ENCODE measurements at regions of chr1 and their contacts with region 1.

Region 1: GRCh38 chr1:166865931-166866330 is 10.1 kb downstream of the TADA1 start:
- DNase-seq: no peak
- H3K4me3 ChIP-seq: no peak overlapping the region
- H3K27ac ChIP-seq: no peak overlapping the region
- H3K4me1 ChIP-seq: no peaks in the 10 kb centered on the region
- H3K27me3 ChIP-seq: no peaks in the 10 kb centered on the region
- CTCF ChIP-seq: no peak
- POLR2A ChIP-seq: no peak

Region 2: DNA sequence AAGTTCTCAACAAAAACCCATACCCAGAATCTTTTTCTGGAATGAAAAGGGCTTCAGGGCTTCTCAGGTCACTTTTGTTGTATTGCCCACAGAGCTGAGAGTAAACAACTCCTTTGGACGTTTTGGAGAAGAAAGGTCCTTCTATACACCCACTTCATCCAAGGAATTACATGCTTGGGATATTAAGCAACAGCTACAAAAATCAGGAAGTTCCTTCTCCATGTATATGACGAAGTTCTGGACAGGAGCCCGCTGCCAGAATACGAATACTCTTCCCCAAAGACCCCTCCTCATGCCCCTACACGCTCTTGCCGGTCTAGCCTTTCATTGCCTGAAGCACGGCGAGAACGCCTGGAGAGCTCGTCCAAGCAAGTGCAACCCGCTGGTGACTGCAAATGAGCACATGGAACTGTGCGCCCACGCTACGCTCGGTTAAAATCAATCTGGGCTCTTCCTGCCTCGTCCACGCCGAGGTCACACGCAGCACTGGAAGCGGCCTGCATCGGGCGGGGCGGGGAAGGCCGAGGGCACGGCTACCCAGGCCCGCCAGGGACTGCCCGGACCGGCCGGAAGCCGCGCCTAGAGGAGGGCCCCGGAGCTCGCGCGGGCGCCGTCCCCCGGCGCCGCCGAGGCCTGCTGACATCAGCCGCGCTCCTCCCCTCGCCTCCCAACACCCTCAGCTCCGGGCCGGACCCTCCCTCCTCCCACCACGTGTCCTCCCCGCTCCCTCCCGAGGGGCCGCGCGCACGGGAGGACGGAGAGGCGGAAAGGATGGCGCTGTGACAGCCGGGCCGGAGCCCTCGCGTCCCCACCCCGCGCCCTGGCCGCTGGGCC is 26.9 kb before region 1 on chr1 and contains the start of gene POGK:
- CTCF ChIA-PET with region 1: interaction called, 4 read pairs
- POLR2A ChIA-PET with region 1: no interaction called
- dilution Hi-C with region 1: no loop called
- intact Hi-C with region 1: loop called (anchors 2 kb)
- DNase-seq: peak; percentile 90
- H3K4me3 ChIP-seq: peak within 1 kb of the TSS; percentile 35 to 63 (median 54)
- H3K27ac ChIP-seq: peak within 1 kb of the TSS; percentile 14
- H3K4me1 ChIP-seq: peaks cover 18% of the 10 kb centered on the region
- H3K27me3 ChIP-seq: no peaks in the 10 kb centered on the region
- CTCF ChIP-seq: no peak
- POLR2A ChIP-seq: peak; percentile 81
- total RNA-seq, gene POGK: 31.8 and 32.2 TPM in 2 replicates

Region 3: DNA sequence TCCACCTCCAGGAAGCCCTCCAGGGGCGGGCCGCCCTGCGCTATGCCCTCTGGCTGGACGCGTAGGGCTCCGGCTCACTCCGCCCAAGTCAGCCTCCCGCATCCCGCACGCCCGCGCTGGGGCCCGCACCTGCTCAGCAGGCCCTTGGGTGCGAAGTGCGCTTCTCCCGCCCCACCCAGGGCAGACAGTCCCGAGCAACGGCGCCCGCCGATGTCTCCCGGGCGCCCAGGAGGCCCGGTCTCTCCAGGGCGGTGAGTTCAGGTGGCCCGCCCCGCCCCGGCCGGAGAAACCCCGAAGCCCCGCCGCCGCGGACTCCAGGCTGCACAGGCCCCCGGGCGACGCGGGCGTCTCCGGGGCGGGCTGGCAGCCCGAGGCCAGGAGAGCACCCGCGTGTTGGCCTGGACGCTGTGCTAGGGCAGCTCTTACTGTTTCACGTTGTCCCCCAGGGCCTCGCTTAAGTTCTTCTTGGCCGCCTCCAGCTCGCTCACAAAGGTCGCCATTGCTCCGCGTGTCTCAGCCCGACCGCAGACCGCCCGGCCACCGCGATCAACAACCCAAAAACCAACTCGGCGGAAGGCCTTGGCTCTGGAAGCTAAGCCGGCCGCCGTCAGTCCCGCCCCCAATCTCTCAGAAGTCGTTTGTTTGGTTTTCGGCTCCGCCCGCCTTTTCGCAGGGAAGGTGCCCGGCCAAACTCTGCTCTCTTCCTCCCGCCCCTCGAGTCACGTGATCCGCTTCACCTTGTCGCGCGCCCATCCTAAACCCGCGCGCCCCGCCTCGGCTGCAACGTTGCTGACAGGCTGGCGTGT is 10.0 kb after region 1 on chr1 and contains the start of gene TADA1:
- CTCF ChIA-PET with region 1: interaction called, 3 read pairs
- POLR2A ChIA-PET with region 1: interaction called, 3 read pairs
- dilution Hi-C with region 1: no loop called
- intact Hi-C with region 1: loop called (anchors 1 kb)
- DNase-seq: peak; percentile 98
- H3K4me3 ChIP-seq: peak within 1 kb of the TSS; percentile 2 to 63 (median 53)
- H3K27ac ChIP-seq: peak within 1 kb of the TSS; percentile 47
- H3K4me1 ChIP-seq: peaks cover 10% of the 10 kb centered on the region
- H3K27me3 ChIP-seq: no peaks in the 10 kb centered on the region
- CTCF ChIP-seq: peak in 1 of 2 donors; percentile 22
- POLR2A ChIP-seq: peak; percentile 72
- total RNA-seq, gene TADA1: 7.0 and 7.5 TPM in 2 replicates

Region 4: DNA sequence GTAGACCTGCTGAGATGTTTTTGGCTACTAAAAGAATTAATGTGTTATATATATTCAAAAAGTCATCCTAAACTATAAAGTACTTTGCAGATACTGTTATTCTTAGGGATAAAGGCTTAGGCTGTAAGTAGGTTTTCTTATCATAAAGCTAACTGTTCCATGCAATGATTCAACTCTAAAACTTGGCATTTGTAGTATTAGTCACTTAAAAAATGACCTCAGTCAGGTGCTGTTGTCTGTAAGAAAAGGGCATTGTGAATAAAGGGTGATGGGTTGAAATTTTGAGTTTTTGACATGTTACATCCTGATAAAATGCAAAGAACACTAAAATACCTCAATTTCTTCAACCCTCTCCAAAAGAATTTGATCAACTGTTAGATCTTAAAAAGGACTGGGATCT is 1015.1 kb after region 1 on chr1:
- CTCF ChIA-PET with region 1: no interaction called
- POLR2A ChIA-PET with region 1: no interaction called
- dilution Hi-C with region 1: no loop called
- intact Hi-C with region 1: no loop called
- DNase-seq: no peak
- H3K4me3 ChIP-seq: no peak overlapping the region
- H3K27ac ChIP-seq: no peak overlapping the region
- H3K4me1 ChIP-seq: no peaks in the 10 kb centered on the region
- H3K27me3 ChIP-seq: no peaks in the 10 kb centered on the region
- CTCF ChIP-seq: no peak
- POLR2A ChIP-seq: no peak

Measured in endothelial cell of umbilical vein (primary cell).